Activated CD4-positive, alpha-beta T cell treated with anti-CD3 and anti-CD28 coated beads for 36 hours (primary cell): ENCODE measurements at regions of chr18 and their contacts with region 1.

Region 1: DNA sequence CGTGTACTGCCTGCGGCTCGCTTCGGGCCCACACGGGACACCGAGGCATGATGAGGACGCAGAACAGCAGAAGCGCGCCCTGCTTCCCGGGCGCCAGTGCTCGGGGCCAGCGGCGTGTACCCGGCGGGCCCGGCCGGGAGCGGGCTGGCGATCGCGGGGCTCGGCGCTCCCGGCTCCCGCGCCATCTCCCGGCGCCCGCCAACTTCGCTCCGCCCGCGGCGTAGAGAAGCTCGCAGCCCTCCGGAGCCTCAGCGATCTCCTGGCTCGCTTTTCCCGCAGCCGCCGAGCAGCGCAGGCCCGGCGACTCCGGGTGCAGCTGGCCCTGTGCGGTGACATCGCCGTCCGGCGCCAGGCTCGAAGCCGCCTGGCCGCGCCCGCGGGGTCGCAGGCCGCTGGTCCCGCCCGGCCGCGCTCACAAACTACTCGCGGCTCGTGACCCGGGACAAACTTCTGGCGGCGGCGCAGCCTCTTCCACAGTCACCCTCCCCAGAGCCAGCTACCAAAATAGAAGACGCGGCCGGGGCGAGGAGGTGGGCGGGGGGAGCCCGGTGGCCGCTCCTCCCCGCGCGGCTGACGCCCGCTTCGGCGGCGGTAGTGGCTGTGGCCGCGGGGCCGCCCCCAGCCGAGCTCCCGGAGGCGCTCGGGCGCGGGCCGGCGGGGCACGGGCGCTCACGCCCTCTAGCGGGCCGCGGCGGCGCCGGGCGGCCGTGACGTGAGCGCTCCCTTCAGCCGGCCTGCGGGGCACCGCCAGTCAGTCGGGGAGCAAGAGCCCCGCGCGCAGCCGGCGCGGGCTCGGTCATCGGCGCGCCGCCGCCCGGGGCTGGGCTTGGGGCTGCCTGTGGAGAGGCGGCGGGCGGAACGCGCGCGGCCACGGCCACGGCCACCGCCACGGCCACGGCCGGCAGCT is at the start of gene PTPRM:
- DNase-seq: peak; percentile 78
- ATAC-seq: peak; percentile 94
- H3K4me3 Mint-ChIP-seq: peak within 1 kb of the TSS; percentile 10
- H3K27ac Mint-ChIP-seq: no peak within 1 kb of the TSS
- H3K4me1 Mint-ChIP-seq: peaks cover 2% of the 10 kb centered on the region
- H3K27me3 Mint-ChIP-seq: peaks cover 42% of the 10 kb centered on the region
- total RNA-seq, gene PTPRM: 6.5 to 14.0 TPM

Region 2: GRCh38 chr18:5646739-5647138 is 1920.1 kb before region 1 on chr18:
- CTCF ChIA-PET with region 1: no interaction called
- POLR2A ChIA-PET with region 1: no interaction called
- intact Hi-C with region 1: no loop called
- DNase-seq: no peak
- ATAC-seq: no peak
- H3K4me3 Mint-ChIP-seq: no peak overlapping the region
- H3K27ac Mint-ChIP-seq: no peak overlapping the region
- H3K4me1 Mint-ChIP-seq: no peaks in the 10 kb centered on the region
- H3K27me3 Mint-ChIP-seq: peaks cover 3% of the 10 kb centered on the region

Region 3: GRCh38 chr18:7221424-7222155 is 345.2 kb before region 1 on chr18:
- CTCF ChIA-PET with region 1: no interaction called
- POLR2A ChIA-PET with region 1: no interaction called
- intact Hi-C with region 1: loop called in 1 of 2 experiments (anchors 1 kb)
- DNase-seq: peak; percentile 39
- ATAC-seq: no peak
- H3K4me3 Mint-ChIP-seq: no peak overlapping the region
- H3K27ac Mint-ChIP-seq: no peak overlapping the region
- H3K4me1 Mint-ChIP-seq: no peaks in the 10 kb centered on the region
- H3K27me3 Mint-ChIP-seq: peaks cover 5% of the 10 kb centered on the region

Region 4: GRCh38 chr18:7317804-7318231 is 249.0 kb before region 1 on chr18:
- CTCF ChIA-PET with region 1: no interaction called
- POLR2A ChIA-PET with region 1: no interaction called
- intact Hi-C with region 1: no loop called
- DNase-seq: no peak
- ATAC-seq: no peak
- H3K4me3 Mint-ChIP-seq: no peak overlapping the region
- H3K27ac Mint-ChIP-seq: no peak overlapping the region
- H3K4me1 Mint-ChIP-seq: no peaks in the 10 kb centered on the region
- H3K27me3 Mint-ChIP-seq: peaks cover 4% of the 10 kb centered on the region

Region 5: GRCh38 chr18:7677001-7677400 is 110.2 kb after region 1 on chr18:
- CTCF ChIA-PET with region 1: no interaction called
- POLR2A ChIA-PET with region 1: no interaction called
- intact Hi-C with region 1: no loop called
- DNase-seq: no peak
- ATAC-seq: no peak
- H3K4me3 Mint-ChIP-seq: no peak overlapping the region
- H3K27ac Mint-ChIP-seq: no peak overlapping the region
- H3K4me1 Mint-ChIP-seq: no peaks in the 10 kb centered on the region
- H3K27me3 Mint-ChIP-seq: no peaks in the 10 kb centered on the region

Region 6: DNA sequence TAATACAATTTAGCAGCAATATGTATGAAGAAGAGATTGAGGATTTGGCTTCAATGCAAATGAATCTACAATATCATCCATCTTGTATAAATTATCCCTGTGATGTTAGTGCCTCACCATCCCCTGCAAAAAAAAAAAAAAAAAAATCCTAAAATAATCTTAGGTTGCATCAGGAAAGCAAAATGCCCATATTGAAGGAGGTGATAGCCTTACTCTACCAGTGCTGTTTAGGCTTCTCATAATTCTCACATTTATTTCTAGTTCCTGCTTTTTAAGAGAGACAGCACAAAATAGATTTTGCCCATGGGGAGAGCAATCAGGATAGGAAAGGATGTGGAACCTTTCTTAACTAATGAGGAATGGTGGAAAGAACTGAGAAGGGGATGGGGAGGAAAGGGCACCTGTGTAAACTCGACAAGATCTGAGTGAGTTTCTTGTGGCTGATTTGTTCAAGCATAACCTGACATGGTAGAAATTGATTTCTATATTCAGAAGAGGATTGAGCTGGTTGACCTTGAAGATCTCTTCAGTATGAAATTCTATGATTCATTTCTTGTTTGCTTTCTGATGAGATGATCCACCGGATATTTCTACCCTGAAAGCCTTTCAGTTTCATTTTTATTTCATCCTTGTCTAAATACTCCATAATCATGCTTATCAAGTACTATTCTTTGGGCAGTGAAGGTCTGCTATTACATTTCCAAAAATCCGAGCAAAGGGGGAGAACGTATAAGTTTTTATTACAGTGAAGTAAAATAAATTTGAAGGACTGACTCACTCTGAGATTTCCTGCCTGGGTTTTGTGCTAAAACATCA is 391.5 kb after region 1 on chr18:
- CTCF ChIA-PET with region 1: no interaction called
- POLR2A ChIA-PET with region 1: no interaction called
- intact Hi-C with region 1: loop called in 1 of 2 experiments (anchors 5 kb)
- DNase-seq: no peak
- ATAC-seq: peak; percentile 76
- H3K4me3 Mint-ChIP-seq: peak overlapping the region; percentile 10
- H3K27ac Mint-ChIP-seq: peak overlapping the region; percentile 88
- H3K4me1 Mint-ChIP-seq: peaks cover 53% of the 10 kb centered on the region
- H3K27me3 Mint-ChIP-seq: no peaks in the 10 kb centered on the region

Region 7: DNA sequence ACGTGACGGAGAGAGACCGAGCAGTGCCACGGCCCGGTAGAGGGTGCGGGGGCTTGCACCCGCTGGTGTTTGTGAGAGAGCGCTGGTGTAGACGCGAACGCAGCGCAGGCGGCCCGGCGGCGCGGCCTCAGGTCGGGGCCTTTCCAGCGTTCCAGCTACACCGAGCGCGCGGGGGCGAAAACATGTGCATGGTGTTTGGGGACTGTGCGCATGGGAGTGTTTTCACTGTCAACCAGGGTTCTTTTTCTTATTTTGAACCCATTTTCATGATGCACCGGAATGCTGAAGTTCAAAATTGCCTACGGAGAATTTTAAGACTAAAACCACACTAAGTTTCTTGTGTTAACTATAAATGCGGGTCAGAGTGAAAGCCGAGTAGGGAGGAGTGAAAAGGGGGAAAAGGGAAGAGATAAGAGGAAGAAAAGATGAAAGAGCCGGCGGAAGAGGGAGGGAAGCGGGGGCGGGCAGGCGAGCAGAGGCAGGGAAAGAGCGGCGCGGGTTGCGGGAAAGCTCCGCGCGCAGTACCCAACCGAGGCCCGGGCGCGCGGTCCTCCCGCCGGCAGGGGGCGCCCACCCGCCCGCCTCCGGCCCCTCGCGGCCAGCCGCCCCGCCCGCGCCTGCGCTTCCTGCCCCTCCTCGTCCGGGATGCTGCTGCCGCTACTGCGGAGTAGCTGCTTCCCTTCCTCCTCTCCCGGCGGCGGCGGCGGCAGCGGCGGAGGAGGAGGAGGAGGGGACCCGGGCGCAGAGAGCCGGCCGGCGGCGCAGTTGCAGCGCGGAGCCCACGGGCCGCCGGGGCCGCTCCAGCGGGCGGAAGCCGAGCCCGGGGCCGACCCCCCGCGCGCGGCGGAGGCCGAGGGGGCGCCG is 1042.2 kb after region 1 on chr18 and contains the start of gene RAB12:
- CTCF ChIA-PET with region 1: interaction called, 3 read pairs
- POLR2A ChIA-PET with region 1: no interaction called
- intact Hi-C with region 1: loop called in 1 of 2 experiments (anchors 10 kb)
- DNase-seq: peak; percentile 92
- ATAC-seq: peak; percentile 88
- H3K4me3 Mint-ChIP-seq: peak within 1 kb of the TSS; percentile 90
- H3K27ac Mint-ChIP-seq: peak within 1 kb of the TSS; percentile 91
- H3K4me1 Mint-ChIP-seq: peaks cover 47% of the 10 kb centered on the region
- H3K27me3 Mint-ChIP-seq: no peaks in the 10 kb centered on the region
- total RNA-seq, gene RAB12: 12.4 to 12.8 TPM